Activated CD4-positive, alpha-beta memory T cell treated with anti-CD3 and anti-CD28 coated beads for 36 hours (primary cell): ENCODE measurements at regions of chr18 and their contacts with region 1.

Region 1: DNA sequence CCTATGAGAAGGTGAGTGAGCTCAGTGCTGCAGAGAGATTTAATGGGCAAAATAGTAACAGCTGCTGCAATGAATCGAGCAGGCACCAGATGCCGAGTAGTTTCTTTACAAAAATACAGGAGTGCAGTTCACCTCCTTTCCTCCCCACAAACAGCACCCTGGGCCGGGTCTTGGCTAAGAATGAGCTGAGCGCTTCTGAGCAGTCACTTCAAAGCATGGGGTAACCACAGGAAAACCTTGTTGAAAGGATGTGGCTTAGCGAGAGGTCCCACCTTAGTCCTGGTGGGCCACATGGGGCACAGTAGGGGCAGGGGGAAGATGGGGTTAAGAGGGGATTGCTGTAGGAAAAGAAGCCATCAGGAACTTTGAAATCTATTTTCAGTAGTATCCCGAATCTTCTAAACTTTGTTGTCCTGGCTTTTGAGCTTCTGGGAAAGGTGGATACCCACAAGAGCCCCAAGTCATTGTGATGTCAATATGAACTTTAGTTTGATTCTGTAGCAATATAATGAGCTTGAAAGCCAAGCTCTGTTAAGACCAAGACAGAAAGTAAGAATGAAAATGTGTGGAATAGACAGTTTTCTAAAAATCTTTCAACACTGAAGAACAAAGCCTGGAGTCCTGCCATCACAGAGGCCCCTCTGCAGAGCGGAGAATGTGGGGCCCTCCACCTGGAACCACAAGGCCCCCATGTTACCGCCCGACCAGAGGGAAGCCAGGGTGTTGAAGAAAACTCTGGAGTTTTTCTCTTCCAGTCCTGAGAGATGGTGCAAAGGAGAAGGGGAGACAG is 101.0 kb upstream of the ZNF236 start:
- DNase-seq: peak; percentile 69
- H3K4me3 Mint-ChIP-seq: peak overlapping the region; percentile 9
- H3K27ac Mint-ChIP-seq: peak overlapping the region; percentile 67
- H3K4me1 Mint-ChIP-seq: peaks cover 40% of the 10 kb centered on the region
- H3K27me3 Mint-ChIP-seq: no peaks in the 10 kb centered on the region

Region 2: DNA sequence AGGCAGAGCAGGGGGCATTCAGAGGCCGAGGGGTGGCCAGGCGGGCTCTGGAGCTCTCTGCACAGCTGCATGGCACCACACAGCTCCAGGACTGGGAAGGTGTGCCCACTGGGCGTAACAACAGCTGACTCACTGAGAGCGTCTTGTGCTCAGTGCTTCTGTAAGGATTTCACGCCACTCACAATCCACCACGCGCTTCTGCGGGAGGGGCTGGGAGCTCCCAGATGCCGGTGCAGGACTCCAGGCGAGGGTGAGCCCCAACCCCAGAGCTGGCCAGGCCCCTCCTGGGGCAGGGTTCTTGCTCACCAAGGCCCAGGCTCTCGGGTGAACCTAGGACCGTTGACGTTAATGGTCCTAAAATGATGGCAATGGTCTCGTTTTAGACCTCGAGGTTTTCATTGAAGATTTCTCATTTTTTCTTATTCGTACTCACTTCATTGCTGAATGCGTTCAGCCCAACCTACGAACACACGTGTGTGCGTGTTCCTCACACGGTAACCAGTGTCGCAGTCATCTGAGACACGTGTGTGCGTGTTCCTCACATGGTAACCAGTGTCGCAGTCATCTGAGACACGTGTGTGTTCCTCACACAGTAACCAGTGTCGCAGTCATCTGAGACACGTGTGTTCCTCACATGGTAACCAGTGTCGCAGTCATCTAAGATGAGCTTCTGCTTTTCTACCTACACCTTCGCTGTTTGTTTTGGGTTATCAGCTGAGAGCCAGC is 62.5 kb after region 1 on chr18:
- CTCF ChIA-PET with region 1: no interaction called
- POLR2A ChIA-PET with region 1: no interaction called
- intact Hi-C with region 1: loop called (anchors 2 kb)
- DNase-seq: no peak
- H3K4me3 Mint-ChIP-seq: no peak overlapping the region
- H3K27ac Mint-ChIP-seq: no peak overlapping the region
- H3K4me1 Mint-ChIP-seq: peaks cover 5% of the 10 kb centered on the region
- H3K27me3 Mint-ChIP-seq: peaks cover 12% of the 10 kb centered on the region